ENCODE measurements at regions of chr7 and their contacts with region 1.

Region 1: DNA sequence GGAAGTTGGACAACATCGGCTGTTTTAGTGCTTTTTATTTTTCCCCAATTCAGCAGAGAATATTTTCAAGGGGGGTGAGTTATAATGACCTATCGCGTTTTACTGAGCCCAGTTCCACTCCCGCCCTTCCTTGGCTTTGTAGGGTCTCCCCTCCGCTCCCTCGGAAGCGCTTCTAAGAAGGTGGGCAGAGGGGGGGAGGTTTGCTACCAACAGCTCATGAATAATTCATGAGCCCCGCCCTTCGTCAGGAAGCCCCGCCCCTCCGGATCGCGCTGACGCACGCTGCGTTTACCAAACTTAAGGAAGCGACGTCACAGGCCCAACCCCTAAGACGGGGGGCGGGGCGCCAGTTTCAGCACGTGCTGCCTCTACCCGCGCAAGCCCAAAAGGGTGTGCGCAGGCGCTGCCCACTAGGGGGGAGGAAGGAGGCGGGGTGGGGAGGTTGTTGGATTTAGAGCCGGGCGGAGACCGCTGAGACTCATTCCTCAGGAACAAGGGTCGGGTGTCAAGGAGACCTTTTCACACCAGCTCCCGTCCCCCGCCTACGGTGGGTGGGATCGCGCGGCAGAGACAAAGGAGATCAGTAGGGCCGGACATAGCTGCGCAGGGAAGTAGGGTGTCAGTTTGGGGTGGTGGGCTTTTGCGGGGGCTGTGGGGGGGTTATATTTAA is 529 bp upstream of the MEPCE start:
- DNase-seq: peak; percentile 100
- H3K4me3 Mint-ChIP-seq: peak overlapping the region; percentile 98
- H3K27ac Mint-ChIP-seq: peak overlapping the region; percentile 100
- H3K4me1 Mint-ChIP-seq: peaks cover 46% of the 10 kb centered on the region
- H3K27me3 Mint-ChIP-seq: peaks cover 8% of the 10 kb centered on the region

Region 2: GRCh38 chr7:99408379-99409191 is 1020.5 kb before region 1 on chr7 and contains the starts of genes BUD31 and PDAP1:
- CTCF ChIA-PET with region 1: no interaction called
- POLR2A ChIA-PET with region 1: no interaction called
- intact Hi-C with region 1: loop called (anchors 2 kb)
- DNase-seq: peak; percentile 97
- H3K4me3 Mint-ChIP-seq: peak within 1 kb of the TSS; percentile 99
- H3K27ac Mint-ChIP-seq: peak within 1 kb of the TSS; percentile 99
- H3K4me1 Mint-ChIP-seq: peaks cover 41% of the 10 kb centered on the region
- H3K27me3 Mint-ChIP-seq: no peaks in the 10 kb centered on the region
- total RNA-seq, gene BUD31: 143 to 149 TPM
- total RNA-seq, gene PDAP1: 149 to 162 TPM

Region 3: GRCh38 chr7:100079024-100079560 is 350.0 kb before region 1 on chr7:
- CTCF ChIA-PET with region 1: no interaction called
- POLR2A ChIA-PET with region 1: no interaction called
- intact Hi-C with region 1: no loop called
- DNase-seq: no peak
- H3K4me3 Mint-ChIP-seq: no peak overlapping the region
- H3K27ac Mint-ChIP-seq: no peak overlapping the region
- H3K4me1 Mint-ChIP-seq: peaks cover 29% of the 10 kb centered on the region
- H3K27me3 Mint-ChIP-seq: no peaks in the 10 kb centered on the region

Region 4: GRCh38 chr7:100126931-100127865 is 301.9 kb before region 1 on chr7 and contains the start of gene MBLAC1:
- CTCF ChIA-PET with region 1: no interaction called
- POLR2A ChIA-PET with region 1: interaction called, 5 read pairs
- intact Hi-C with region 1: loop called (anchors 5 kb)
- DNase-seq: peak; percentile 93
- H3K4me3 Mint-ChIP-seq: peak within 1 kb of the TSS; percentile 95
- H3K27ac Mint-ChIP-seq: peak within 1 kb of the TSS; percentile 96
- H3K4me1 Mint-ChIP-seq: peaks cover 28% of the 10 kb centered on the region
- H3K27me3 Mint-ChIP-seq: no peaks in the 10 kb centered on the region
- total RNA-seq, gene MBLAC1: 2.3 to 3.4 TPM

Region 5: DNA sequence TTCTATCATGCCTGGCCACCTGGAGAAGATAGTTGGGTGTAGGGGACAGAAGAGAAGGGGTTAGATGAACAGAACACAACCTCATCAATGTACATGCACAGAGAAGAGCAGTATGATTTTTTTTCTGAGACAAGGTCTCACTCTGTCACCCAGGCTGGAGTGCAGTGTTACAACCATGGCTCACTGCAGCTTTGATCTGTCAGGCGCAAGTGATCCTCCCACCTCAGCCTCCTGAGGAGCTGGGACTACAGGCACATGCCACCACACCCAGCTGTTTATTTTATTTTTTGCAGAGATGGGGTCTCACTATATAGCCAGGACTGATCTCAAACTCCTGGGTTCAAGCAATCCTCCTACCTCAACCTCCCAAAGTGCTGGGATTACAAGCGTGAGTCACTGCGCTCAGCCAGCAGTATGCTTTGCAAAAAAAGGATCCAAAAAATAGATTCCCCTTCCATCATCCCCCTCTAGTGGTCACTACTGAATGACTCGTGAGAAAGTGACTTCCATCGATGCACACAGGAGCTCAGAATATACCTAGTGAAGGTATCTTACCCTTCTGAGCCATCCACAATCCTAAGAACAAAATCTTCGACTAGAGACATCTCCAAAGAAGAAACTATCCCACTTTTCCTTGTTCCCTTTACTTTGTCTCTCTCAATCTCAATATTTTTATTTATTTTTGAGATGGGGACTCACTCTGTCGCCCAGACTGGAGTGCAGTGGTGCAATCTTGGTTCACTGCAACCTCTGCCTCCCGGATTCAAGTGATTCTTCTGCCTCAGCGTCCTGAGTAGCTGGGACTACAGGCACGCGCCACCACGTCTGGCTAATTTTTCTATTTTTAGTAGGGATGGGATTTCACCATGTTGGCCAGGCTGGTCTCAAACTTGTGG is 21.6 kb before region 1 on chr7:
- CTCF ChIA-PET with region 1: interaction called, 4 read pairs
- POLR2A ChIA-PET with region 1: interaction called, 11 read pairs
- intact Hi-C with region 1: no loop called
- DNase-seq: peak; percentile 45
- H3K4me3 Mint-ChIP-seq: no peak overlapping the region
- H3K27ac Mint-ChIP-seq: no peak overlapping the region
- H3K4me1 Mint-ChIP-seq: no peaks in the 10 kb centered on the region
- H3K27me3 Mint-ChIP-seq: no peaks in the 10 kb centered on the region

Region 6: DNA sequence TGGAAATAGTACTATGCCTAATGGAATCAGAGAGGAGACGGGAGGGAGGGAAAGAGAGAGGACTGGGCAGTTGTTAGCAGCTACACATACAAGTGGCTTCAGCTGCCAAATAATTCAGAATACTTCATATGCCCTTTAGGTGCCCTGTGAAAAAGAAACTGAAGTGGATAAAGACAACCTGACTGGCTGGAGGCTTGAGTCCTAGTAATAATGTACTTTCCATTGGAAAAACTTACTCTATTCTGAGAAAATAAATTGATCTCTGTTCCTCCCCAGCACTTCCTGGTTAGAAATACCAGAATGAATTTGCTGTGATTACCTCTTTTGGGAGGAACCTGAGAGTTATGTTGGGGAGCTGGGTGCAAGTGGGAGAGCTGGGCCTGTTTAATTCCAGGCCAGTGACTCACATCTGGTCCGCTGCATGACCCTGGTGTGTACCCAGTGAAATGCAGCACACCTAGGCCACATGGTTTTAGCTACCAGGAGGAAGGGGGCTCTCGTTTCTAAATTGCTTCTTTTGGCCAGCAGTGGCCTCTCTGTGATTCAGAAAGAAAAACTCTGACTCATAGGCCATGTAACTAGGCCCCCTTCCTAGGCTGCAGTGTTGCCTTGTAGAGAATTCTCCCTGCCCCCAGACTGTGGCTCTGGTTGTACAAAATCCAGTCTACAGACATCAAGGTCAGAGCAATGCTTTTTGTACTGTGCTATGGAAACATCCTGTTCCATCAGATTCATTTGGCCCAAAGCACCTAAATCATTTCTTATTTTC is 116.4 kb after region 1 on chr7:
- CTCF ChIA-PET with region 1: no interaction called
- POLR2A ChIA-PET with region 1: interaction called, 8 read pairs
- intact Hi-C with region 1: loop called (anchors 1 kb)
- DNase-seq: peak; percentile 85
- H3K4me3 Mint-ChIP-seq: peak overlapping the region; percentile 72
- H3K27ac Mint-ChIP-seq: peak overlapping the region; percentile 98
- H3K4me1 Mint-ChIP-seq: peaks cover 94% of the 10 kb centered on the region
- H3K27me3 Mint-ChIP-seq: no peaks in the 10 kb centered on the region

Region 7: DNA sequence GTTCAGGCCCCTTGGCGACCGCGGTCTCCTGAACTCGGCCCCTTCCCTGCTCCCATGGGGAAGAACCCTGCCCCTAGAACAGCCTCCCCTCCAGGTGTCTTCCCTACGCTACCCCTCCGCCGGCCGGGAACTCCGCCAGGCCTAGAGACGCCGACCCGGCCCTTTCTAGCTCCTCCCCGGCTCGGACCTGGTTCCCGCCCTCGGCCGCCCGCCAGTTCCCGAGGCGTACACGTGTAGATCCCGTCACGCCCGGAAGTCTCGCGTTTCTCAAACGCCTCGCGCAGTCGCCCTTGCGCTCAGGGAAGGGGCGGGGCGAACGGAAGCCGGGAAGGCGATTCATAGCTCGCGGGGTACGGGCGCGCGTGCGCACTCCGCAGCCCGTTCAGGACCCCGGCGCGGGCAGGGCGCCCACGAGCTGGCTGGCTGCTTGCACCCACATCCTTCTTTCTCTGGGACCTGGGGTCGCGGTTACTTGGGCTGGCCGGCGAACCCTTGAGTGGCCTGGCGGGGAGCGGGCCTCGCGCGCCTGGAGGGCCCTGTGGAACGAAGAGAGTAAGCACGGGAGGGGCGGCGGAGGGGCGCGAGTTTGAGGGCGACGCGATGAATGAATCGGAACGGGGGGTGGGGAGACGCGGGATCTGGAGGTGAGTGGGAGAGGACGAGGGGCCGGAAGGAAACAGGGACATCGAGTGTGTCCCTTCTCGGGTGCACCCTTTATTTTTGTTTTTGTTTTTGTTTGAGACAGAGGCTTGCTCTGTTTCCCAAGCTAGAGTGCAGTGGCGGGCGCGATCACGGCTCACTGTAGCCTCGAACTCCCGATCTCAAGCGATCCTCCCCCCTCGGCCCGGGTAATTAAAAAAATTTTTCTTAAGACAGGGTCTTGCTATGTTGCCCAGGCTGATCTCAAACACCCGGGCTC is 276.9 kb after region 1 on chr7 and contains the start of gene POP7:
- CTCF ChIA-PET with region 1: interaction called, 5 read pairs
- POLR2A ChIA-PET with region 1: interaction called, 7 read pairs
- intact Hi-C with region 1: loop called (anchors 1 kb)
- DNase-seq: peak; percentile 99
- H3K4me3 Mint-ChIP-seq: peak within 1 kb of the TSS; percentile 90
- H3K27ac Mint-ChIP-seq: peak within 1 kb of the TSS; percentile 88
- H3K4me1 Mint-ChIP-seq: peaks cover 14% of the 10 kb centered on the region
- H3K27me3 Mint-ChIP-seq: no peaks in the 10 kb centered on the region
- total RNA-seq, gene POP7: 38.7 to 42.2 TPM